ENCODE measurements at regions of chr2 and their contacts with region 1.

Region 1: DNA sequence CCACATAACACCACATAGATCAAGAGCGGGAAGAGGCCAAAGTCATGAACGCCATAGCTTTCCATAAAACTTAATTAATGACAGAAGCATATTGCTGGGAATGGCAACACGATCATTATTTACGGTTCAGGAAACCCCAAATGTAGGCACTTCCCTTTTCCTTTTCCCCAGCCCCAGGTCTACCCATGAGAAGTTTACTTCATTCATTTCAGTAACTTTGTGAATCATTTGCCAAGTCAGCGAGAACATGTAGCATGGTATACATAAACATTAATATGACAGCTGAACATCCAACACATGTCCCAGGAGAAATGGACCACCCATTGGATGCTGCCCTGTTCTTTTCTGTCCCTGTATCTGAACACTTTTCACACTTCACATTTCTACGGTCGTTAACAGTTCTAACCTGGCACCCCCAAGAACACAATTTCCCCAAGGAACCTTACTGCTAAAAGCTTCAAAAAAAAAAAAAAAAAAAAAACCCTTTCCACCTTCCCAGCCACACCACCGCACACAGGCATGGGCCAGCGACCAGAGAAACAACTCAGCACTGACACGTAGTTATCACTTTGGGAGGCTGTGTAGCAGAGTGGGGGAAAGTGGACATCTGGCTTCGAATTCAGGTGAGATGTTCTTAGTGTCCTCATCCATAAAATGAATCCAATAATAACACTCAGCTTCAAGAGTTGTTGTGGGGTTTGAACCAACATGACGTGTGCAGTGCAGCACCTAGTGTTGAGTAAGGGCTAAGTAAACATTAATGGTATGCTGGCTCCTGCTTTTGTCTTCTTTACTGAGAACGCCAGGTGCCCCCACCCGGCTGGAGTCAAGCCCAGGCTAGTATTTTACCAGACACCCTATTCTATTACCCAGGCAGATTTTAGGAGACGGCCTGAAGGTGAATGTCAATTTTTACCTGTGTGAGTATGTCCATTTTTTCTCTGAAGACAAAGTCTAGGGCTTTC is 371.5 kb downstream of the LNPK start:
- DNase-seq: peak; percentile 41 to 44
- H3K4me3 ChIP-seq: no peak overlapping the region
- H3K4me3 Mint-ChIP-seq: no peak overlapping the region
- H3K27ac Mint-ChIP-seq: peak overlapping the region; percentile 12
- H3K4me1 ChIP-seq: peaks cover 15% of the 10 kb centered on the region
- H3K4me1 Mint-ChIP-seq: peaks cover 20% of the 10 kb centered on the region
- H3K27me3 ChIP-seq: no peaks in the 10 kb centered on the region
- H3K27me3 Mint-ChIP-seq: no peaks in the 10 kb centered on the region
- CTCF ChIP-seq: peak in 1 of 2 experiments; percentile 22

Region 2: GRCh38 chr2:175366815-175367214 is 263.7 kb before region 1 on chr2:
- CTCF ChIA-PET with region 1: no interaction called
- POLR2A ChIA-PET with region 1: no interaction called
- intact Hi-C with region 1: loop called (anchors 5 kb)
- DNase-seq: peak; percentile 40 to 62
- H3K4me3 ChIP-seq: no peak overlapping the region
- H3K4me3 Mint-ChIP-seq: no peak overlapping the region
- H3K27ac Mint-ChIP-seq: no peak overlapping the region
- H3K4me1 ChIP-seq: no peaks in the 10 kb centered on the region
- H3K4me1 Mint-ChIP-seq: no peaks in the 10 kb centered on the region
- H3K27me3 ChIP-seq: no peaks in the 10 kb centered on the region
- H3K27me3 Mint-ChIP-seq: peaks cover 16% of the 10 kb centered on the region
- CTCF ChIP-seq: peak; percentile 80 to 87

Region 3: GRCh38 chr2:175414882-175415487 is 215.6 kb before region 1 on chr2:
- CTCF ChIA-PET with region 1: no interaction called
- POLR2A ChIA-PET with region 1: no interaction called
- intact Hi-C with region 1: loop called (anchors 1 kb)
- DNase-seq: peak; percentile 52 to 61
- H3K4me3 ChIP-seq: no peak overlapping the region
- H3K4me3 Mint-ChIP-seq: no peak overlapping the region
- H3K27ac Mint-ChIP-seq: no peak overlapping the region
- H3K4me1 ChIP-seq: peaks cover 7% of the 10 kb centered on the region; the same call in 1 of the 2 replicates
- H3K4me1 Mint-ChIP-seq: peaks cover 4% of the 10 kb centered on the region
- H3K27me3 ChIP-seq: no peaks in the 10 kb centered on the region
- H3K27me3 Mint-ChIP-seq: peaks cover 2% of the 10 kb centered on the region
- CTCF ChIP-seq: peak; percentile 78 to 84

Region 4: DNA sequence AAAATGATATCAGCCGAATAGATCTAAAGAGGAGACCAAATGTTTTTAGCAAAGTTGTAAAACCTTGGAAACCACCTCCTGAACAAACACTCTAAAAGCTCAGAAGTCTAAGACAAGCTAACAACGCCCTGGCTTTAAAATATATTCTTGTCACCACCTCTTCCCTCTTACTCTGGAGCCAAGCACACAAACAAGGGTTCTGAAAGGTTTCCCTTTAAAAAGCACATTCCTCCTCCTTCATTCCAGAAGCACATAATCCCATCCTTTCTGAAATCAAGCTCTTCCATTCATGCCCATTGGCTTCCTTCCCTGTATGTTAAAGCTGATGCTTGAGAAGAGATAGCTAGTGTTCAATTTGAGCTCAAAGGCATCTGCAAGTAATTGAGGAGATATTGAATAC is 10.5 kb before region 1 on chr2:
- CTCF ChIA-PET with region 1: interaction called, 4 read pairs
- POLR2A ChIA-PET with region 1: interaction called, 4 read pairs
- intact Hi-C with region 1: loop called (anchors 1 kb)
- DNase-seq: peak in 1 of 2 experiments; percentile 29
- H3K4me3 ChIP-seq: no peak overlapping the region
- H3K4me3 Mint-ChIP-seq: peak overlapping the region; percentile 20
- H3K27ac Mint-ChIP-seq: peak overlapping the region; percentile 49
- H3K4me1 ChIP-seq: peaks cover 23% of the 10 kb centered on the region
- H3K4me1 Mint-ChIP-seq: peaks cover 34% of the 10 kb centered on the region
- H3K27me3 ChIP-seq: no peaks in the 10 kb centered on the region
- H3K27me3 Mint-ChIP-seq: no peaks in the 10 kb centered on the region
- CTCF ChIP-seq: no peak

Measured in Caco-2 (cell line).